Vagina (tissue), 2 donors: ENCODE measurements at regions of chr1 and their contacts with region 1.

Region 1: GRCh38 chr1:105137543-105138457 is 1388.1 kb downstream of the AMY1C start:
- DNase-seq: no peak
- H3K4me3 ChIP-seq: no peak overlapping the region
- H3K27ac ChIP-seq: no peak overlapping the region
- H3K4me1 ChIP-seq: no peaks in the 10 kb centered on the region
- H3K27me3 ChIP-seq: no peaks in the 10 kb centered on the region
- CTCF ChIP-seq: no peak
- POLR2A ChIP-seq: no peak

Region 2: GRCh38 chr1:106304106-106304505 is 1166.3 kb after region 1 on chr1:
- intact Hi-C with region 1: loop called (anchors 5 kb)
- DNase-seq: no peak
- H3K4me3 ChIP-seq: no peak overlapping the region
- H3K27ac ChIP-seq: no peak overlapping the region
- H3K4me1 ChIP-seq: no peaks in the 10 kb centered on the region
- H3K27me3 ChIP-seq: no peaks in the 10 kb centered on the region
- CTCF ChIP-seq: no peak
- POLR2A ChIP-seq: no peak